ENCODE measurements at regions of chr2 and their contacts with region 1.

Region 1: DNA sequence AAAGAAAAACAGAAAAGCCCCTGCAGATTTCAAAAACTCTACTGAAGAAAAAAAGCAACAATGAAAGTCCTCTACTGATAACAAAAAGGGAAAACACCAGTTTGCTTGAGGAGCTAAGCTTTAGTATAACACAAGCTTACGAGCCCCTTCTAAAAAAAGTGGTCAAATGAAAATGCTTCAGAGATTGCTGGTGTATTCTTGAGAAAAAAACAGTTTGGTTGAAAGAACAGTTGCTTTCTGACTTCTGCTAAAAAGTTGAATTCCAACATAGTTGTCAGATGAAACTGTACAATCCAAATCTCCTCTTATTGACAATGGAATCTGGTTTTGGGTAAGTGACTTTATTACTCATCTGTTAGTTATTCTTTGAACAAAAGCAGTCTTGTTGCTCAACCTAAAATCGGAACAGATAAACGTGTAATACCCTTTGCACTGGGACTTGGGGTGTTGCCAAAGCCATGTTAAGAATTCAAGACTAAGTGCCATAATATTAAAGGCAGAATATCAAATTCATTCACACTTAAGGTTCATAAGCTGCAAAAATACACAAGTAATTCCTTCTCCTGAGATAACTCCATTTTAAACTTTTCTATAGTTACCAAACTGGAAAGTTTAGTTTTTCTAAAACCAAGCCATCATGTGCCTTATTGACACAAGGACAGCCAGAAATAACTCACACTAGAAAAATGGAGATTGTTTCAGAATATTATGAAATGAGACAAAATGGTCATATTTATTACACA is 45.3 kb upstream of the SPAG16 start:
- DNase-seq: peak; percentile 55 to 74
- H3K4me3 ChIP-seq: no peak overlapping the region
- H3K4me3 Mint-ChIP-seq: peak overlapping the region; percentile 68
- H3K27ac Mint-ChIP-seq: peak overlapping the region; percentile 98
- H3K4me1 ChIP-seq: peaks cover 47% of the 10 kb centered on the region
- H3K4me1 Mint-ChIP-seq: peaks cover 33% of the 10 kb centered on the region
- H3K27me3 ChIP-seq: no peaks in the 10 kb centered on the region
- H3K27me3 Mint-ChIP-seq: no peaks in the 10 kb centered on the region
- CTCF ChIP-seq: no peak

Region 2: GRCh38 chr2:212667751-212668316 is 571.1 kb before region 1 on chr2:
- CTCF ChIA-PET with region 1: no interaction called
- POLR2A ChIA-PET with region 1: no interaction called
- intact Hi-C with region 1: no loop called
- DNase-seq: no peak
- H3K4me3 ChIP-seq: no peak overlapping the region
- H3K4me3 Mint-ChIP-seq: no peak overlapping the region
- H3K27ac Mint-ChIP-seq: no peak overlapping the region
- H3K4me1 ChIP-seq: no peaks in the 10 kb centered on the region
- H3K4me1 Mint-ChIP-seq: no peaks in the 10 kb centered on the region
- H3K27me3 ChIP-seq: no peaks in the 10 kb centered on the region
- H3K27me3 Mint-ChIP-seq: no peaks in the 10 kb centered on the region
- CTCF ChIP-seq: no peak

Region 3: DNA sequence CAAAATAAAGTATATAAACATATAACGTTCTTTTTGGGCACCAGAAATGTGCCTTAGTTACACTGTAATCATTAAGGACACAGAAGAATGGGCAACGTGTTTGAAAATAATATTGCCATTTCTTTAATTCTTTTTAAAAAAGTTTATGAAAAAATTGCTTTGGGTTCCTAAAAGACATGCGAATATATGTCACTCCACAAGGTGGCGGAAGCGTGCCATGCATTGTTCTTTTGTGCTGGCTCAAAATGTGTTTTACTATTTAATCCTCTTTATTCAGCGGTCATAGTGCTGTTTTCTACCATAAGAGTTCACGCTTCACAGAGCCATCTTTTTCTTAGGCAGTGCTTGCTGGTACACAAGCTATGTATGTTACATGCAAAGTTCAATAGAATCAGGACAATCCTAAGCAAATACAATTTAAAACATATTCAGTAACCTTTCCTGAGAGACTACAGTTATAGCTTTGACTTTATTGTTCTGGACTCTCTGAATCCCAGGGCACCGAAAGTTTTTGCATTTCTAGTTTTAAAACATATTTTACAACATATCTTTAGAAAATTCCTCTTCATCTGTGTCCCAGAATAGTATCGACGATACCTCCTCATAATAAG is 552.5 kb before region 1 on chr2:
- CTCF ChIA-PET with region 1: no interaction called
- POLR2A ChIA-PET with region 1: no interaction called
- intact Hi-C with region 1: loop called (anchors 2 kb)
- DNase-seq: peak; percentile 54 to 57
- H3K4me3 ChIP-seq: no peak overlapping the region
- H3K4me3 Mint-ChIP-seq: no peak overlapping the region
- H3K27ac Mint-ChIP-seq: no peak overlapping the region
- H3K4me1 ChIP-seq: no peaks in the 10 kb centered on the region; the same call in 1 of the 2 replicates
- H3K4me1 Mint-ChIP-seq: no peaks in the 10 kb centered on the region
- H3K27me3 ChIP-seq: no peaks in the 10 kb centered on the region
- H3K27me3 Mint-ChIP-seq: peaks cover 3% of the 10 kb centered on the region
- CTCF ChIP-seq: peak; percentile 86 to 89

Region 4: GRCh38 chr2:212863185-212863588 is 375.7 kb before region 1 on chr2:
- CTCF ChIA-PET with region 1: no interaction called
- POLR2A ChIA-PET with region 1: no interaction called
- intact Hi-C with region 1: loop called (anchors 2 kb)
- DNase-seq: peak; percentile 64 to 70
- H3K4me3 ChIP-seq: no peak overlapping the region
- H3K4me3 Mint-ChIP-seq: no peak overlapping the region
- H3K27ac Mint-ChIP-seq: no peak overlapping the region
- H3K4me1 ChIP-seq: no peaks in the 10 kb centered on the region
- H3K4me1 Mint-ChIP-seq: no peaks in the 10 kb centered on the region
- H3K27me3 ChIP-seq: no peaks in the 10 kb centered on the region
- H3K27me3 Mint-ChIP-seq: no peaks in the 10 kb centered on the region
- CTCF ChIP-seq: peak; percentile 57 to 59

Region 5: DNA sequence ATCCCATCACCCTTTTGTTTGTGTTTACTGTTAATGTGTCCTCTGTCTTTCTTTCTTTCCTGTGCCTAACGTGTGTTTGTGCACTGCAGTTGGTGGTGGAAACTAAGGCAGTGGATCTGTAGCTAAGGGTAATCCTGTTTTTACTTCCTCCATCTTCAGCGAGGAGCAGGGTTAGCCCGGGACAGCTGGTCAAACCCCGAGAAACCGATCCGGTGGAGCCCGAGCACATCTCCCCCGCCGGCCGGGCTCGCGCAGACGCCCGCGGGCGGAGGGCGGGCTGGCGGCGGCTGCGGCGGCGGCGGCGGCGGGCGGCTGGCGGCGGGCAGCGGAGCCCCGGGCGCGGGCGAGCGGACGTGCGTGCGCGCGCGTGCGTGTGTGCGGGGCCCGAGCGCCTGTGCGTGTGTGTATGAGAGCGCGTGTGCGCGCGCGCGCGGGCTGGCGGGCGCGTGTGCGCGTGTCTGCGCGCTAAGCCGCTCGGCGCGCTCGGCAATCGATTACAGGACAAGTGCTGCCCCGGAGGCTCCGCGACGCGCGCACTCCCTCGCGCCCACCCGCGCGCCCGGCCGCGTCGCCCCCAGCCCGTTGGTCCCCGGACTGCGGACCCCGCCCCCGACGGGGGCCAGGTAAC is 87.4 kb before region 1 on chr2 and contains the start of gene IKZF2:
- CTCF ChIA-PET with region 1: no interaction called
- POLR2A ChIA-PET with region 1: no interaction called
- intact Hi-C with region 1: loop called (anchors 1 kb)
- DNase-seq: peak; percentile 86 to 88
- H3K4me3 ChIP-seq: peak within 1 kb of the TSS; percentile 70
- H3K4me3 Mint-ChIP-seq: peak within 1 kb of the TSS; percentile 97
- H3K27ac Mint-ChIP-seq: peak within 1 kb of the TSS; percentile 61
- H3K4me1 ChIP-seq: 0 out of 2 replicates have a peak, but pooled peaks cover 3% of the 10 kb centered on the region
- H3K4me1 Mint-ChIP-seq: peaks cover 19% of the 10 kb centered on the region
- H3K27me3 ChIP-seq: no peaks in the 10 kb centered on the region
- H3K27me3 Mint-ChIP-seq: no peaks in the 10 kb centered on the region
- CTCF ChIP-seq: no peak
- total RNA-seq, gene IKZF2: 13.3 and 14.2 TPM in 2 replicates

Region 6: GRCh38 chr2:213175526-213176162 is 63.3 kb before region 1 on chr2:
- CTCF ChIA-PET with region 1: no interaction called
- POLR2A ChIA-PET with region 1: no interaction called
- intact Hi-C with region 1: loop called (anchors 1 kb)
- DNase-seq: peak; percentile 47 to 65
- H3K4me3 ChIP-seq: no peak overlapping the region
- H3K4me3 Mint-ChIP-seq: no peak overlapping the region
- H3K27ac Mint-ChIP-seq: no peak overlapping the region
- H3K4me1 ChIP-seq: peaks cover 37% of the 10 kb centered on the region
- H3K4me1 Mint-ChIP-seq: peaks cover 41% of the 10 kb centered on the region
- H3K27me3 ChIP-seq: no peaks in the 10 kb centered on the region
- H3K27me3 Mint-ChIP-seq: no peaks in the 10 kb centered on the region
- CTCF ChIP-seq: no peak

Region 7: GRCh38 chr2:213227458-213227857 is 11.5 kb before region 1 on chr2:
- CTCF ChIA-PET with region 1: no interaction called
- POLR2A ChIA-PET with region 1: no interaction called
- intact Hi-C with region 1: no loop called
- DNase-seq: no peak
- H3K4me3 ChIP-seq: no peak overlapping the region
- H3K4me3 Mint-ChIP-seq: no peak overlapping the region
- H3K27ac Mint-ChIP-seq: no peak overlapping the region
- H3K4me1 ChIP-seq: no peaks in the 10 kb centered on the region
- H3K4me1 Mint-ChIP-seq: no peaks in the 10 kb centered on the region
- H3K27me3 ChIP-seq: no peaks in the 10 kb centered on the region
- H3K27me3 Mint-ChIP-seq: no peaks in the 10 kb centered on the region
- CTCF ChIP-seq: no peak

Region 8: DNA sequence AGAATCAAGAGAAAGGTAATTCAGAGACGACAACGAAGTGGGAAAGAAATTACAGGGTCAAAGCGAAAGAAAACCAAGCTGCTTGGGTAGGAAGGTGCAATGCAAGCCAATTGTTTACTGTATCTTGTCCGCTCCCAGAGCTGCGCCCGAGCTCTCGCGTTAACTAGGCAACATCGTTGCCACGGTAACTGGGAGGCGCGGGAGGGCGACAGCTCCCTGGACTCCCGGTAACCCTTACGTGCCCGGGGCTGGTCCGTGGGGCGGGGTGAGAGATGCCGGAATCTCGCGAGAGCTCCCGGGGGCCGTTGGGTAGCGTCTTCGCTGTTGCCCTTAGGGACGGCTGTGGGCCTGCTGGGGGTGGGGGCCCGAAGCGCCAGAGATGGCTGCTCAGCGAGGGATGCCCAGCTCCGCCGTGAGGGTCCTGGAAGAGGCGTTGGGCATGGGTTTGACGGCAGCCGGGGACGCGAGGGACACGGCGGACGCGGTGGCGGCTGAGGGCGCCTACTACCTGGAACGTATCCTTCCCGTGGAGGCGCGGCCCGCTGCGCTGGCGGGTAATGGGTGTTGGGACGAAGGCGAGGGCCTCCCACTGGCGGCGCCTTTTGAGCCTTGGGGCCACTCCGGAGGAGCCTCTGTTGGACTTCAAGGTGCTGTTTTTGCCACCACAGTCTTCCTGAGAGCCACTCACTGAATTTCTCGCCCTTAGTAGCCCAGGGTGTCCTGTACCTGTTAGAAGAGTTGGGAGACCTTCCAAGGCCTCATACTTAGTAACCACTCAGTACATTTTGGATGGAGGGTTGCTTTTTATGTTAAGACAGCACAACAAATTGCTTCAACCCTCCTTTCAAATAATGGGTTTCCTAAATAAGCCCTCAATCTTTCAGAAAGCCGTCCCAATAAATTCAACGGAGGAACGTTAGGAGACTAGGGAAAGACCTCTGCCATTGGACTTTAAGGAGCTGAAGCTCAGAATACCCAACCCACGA is 45.5 kb after region 1 on chr2 and contains the start of gene SPAG16:
- CTCF ChIA-PET with region 1: no interaction called
- POLR2A ChIA-PET with region 1: no interaction called
- intact Hi-C with region 1: loop called (anchors 1 kb)
- DNase-seq: peak; percentile 99
- H3K4me3 ChIP-seq: peak within 1 kb of the TSS; percentile 73
- H3K4me3 Mint-ChIP-seq: peak within 1 kb of the TSS; percentile 85
- H3K27ac Mint-ChIP-seq: peak within 1 kb of the TSS; percentile 91
- H3K4me1 ChIP-seq: peaks cover 12% of the 10 kb centered on the region
- H3K4me1 Mint-ChIP-seq: peaks cover 6% of the 10 kb centered on the region
- H3K27me3 ChIP-seq: no peaks in the 10 kb centered on the region
- H3K27me3 Mint-ChIP-seq: no peaks in the 10 kb centered on the region
- CTCF ChIP-seq: no peak
- total RNA-seq, gene SPAG16: 21.5 and 25.3 TPM in 2 replicates

Measured in Caco-2 (cell line).